Esophagus squamous epithelium (tissue), 5 donors: ENCODE measurements at regions of chr2 and their contacts with region 1.

Region 1: GRCh38 chr2:109613922-109614714 is at the starts of genes SEPTIN10 and SOWAHC:
- DNase-seq: peak; percentile 49
- H3K4me3 ChIP-seq: peak within 1 kb of the TSS; percentile 67 to 90 (median 82)
- H3K27ac ChIP-seq: peak within 1 kb of the TSS; percentile 97 to 100 (median 100)
- H3K4me1 ChIP-seq: peaks cover 4 to 81% (median 15%) of the 10 kb centered on the region in 3 donors
- H3K27me3 ChIP-seq: peaks cover 0 to 23% (median 0%) of the 10 kb centered on the region in 4 donors
- CTCF ChIP-seq: peak in 1 of 6 experiments; percentile 5
- POLR2A ChIP-seq: peak in 3 of 4 donors; percentile 37 to 97 (median 96)
- total RNA-seq, gene SEPTIN10: 83.6 to 132 (median 86.4) TPM
- total RNA-seq, gene SOWAHC: 47.9 to 87.9 (median 69.7) TPM

Region 2: GRCh38 chr2:109702618-109702985 is 88.5 kb after region 1 on chr2:
- intact Hi-C with region 1: loop called (anchors 10 kb)
- DNase-seq: no peak
- H3K4me3 ChIP-seq: peak overlapping the region in 1 of 4 donors; percentile 0
- H3K27ac ChIP-seq: peak overlapping the region; percentile 84 to 94 (median 90)
- H3K4me1 ChIP-seq: peaks cover 30 to 75% (median 50%) of the 10 kb centered on the region in 3 donors
- H3K27me3 ChIP-seq: no peaks in the 10 kb centered on the region
- CTCF ChIP-seq: no peak
- POLR2A ChIP-seq: no peak